ENCODE measurements at regions of chr17 and their contacts with region 1.

Region 1: DNA sequence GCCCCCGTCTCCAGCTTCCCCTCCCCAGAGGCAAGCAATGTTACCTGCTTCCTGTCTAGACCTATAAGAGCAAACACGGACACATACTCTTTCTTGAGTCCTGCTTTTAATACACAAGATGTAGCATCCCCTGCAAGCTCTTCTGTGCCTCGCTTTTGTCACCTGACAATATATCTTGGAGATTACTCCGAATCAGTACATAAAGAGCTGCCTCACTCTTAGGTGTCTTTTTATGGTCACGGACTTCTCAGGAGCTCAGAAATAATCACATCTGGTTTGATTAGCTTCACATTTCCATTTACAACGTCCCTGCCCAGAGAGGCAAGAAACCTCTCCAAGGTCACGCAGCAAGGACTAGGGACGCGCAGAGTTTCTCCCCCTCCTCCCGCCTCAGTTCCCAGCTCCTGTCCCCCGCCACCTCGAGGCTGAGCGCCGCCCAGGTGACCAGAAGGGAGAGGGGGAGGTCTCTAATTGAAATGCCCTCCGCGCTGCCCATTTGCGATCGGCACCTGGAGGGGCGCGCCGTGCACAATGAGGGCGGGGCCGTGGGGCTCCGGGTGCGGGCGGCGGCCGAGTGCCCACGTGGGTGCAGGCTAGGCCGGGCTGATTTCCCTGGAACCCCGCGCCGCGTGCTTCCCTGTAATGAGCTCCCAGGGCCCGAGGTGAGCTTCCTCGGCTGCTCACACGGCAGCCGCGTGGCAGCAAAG is 13.8 kb upstream of the SEZ6 start:
- DNase-seq: peak in 2 of 4 experiments; percentile 31 to 32
- ATAC-seq: no peak
- H3K4me3 ChIP-seq: no peak overlapping the region
- H3K27ac ChIP-seq: no peak overlapping the region
- H3K4me1 ChIP-seq: peaks cover 0 to 6% of the 10 kb centered on the region in 2 experiments; a peak in 2 of 5 replicates
- H3K27me3 ChIP-seq: peaks cover 54 to 70% of the 10 kb centered on the region in 2 experiments
- CTCF ChIP-seq: no peak
- EP300 ChIP-seq: no peak
- POLR2A ChIP-seq: no peak
- RAD21 ChIP-seq: no peak

Region 2: GRCh38 chr17:29069526-29070041 is 50.0 kb after region 1 on chr17:
- CTCF ChIA-PET with region 1: no interaction called
- POLR2A ChIA-PET with region 1: interaction called, 3 read pairs
- in situ Hi-C with region 1: no loop called
- intact Hi-C with region 1: loop called (anchors 5 kb)
- DNase-seq: peak; percentile 74 to 86 (median 80)
- ATAC-seq: peak; percentile 97
- H3K4me3 ChIP-seq: no peak overlapping the region
- H3K27ac ChIP-seq: peak overlapping the region; percentile 59; the same call in 1 of the 3 replicates
- H3K4me1 ChIP-seq: peaks cover 3% of the 10 kb centered on the region in 2 experiments; a peak in 1 of 5 replicates
- H3K27me3 ChIP-seq: peaks cover 3 to 9% of the 10 kb centered on the region in 2 experiments; a peak in 3 of 5 replicates
- CTCF ChIP-seq: no peak
- EP300 ChIP-seq: no peak
- POLR2A ChIP-seq: no peak
- RAD21 ChIP-seq: no peak